ENCODE measurements at regions of chr3 and their contacts with region 1.

Region 1: GRCh38 chr3:188439080-188439479 is 285.1 kb downstream of the LPP start:
- DNase-seq: peak in 6 of 9 experiments; percentile 20 to 78 (median 34)
- ATAC-seq: peak; percentile 88
- H3K4me3 ChIP-seq: no peak overlapping the region
- H3K4me3 Mint-ChIP-seq: peak overlapping the region; percentile 48
- H3K27ac ChIP-seq: peak overlapping the region in 1 of 2 experiments; percentile 78
- H3K27ac Mint-ChIP-seq: peak overlapping the region; percentile 41
- H3K4me1 ChIP-seq: peaks cover 17% of the 10 kb centered on the region
- H3K4me1 Mint-ChIP-seq: peaks cover 44% of the 10 kb centered on the region
- H3K27me3 ChIP-seq: no peaks in the 10 kb centered on the region
- H3K27me3 Mint-ChIP-seq: no peaks in the 10 kb centered on the region
- CTCF ChIP-seq: no peak

Region 2: DNA sequence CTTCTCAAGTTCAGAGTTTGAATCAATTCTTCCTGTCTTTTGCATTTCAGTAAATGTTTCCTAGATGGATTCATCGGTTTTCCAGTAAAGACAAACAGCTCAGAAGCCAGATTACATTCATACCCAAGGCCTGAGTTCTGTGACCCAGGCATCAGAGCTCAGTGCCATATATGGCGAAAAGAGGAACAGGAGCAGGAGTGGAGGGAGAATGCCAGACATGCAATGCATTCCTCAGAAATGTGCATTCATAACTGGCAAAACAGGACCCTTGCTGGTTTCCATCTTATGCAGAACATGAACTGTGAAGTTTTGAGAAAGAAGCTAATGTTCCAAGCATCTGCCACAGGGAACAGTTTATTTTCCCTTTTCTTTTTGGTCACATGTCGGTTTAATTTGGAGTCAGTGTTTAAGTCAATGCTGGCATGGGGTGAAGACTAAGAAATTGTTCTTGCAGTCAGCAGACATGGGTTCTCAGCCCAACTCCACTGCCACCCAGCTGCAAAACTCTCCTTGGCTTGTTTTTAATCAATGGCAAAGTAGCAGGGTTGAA is 168.6 kb before region 1 on chr3:
- CTCF ChIA-PET with region 1: no interaction called
- POLR2A ChIA-PET with region 1: no interaction called
- intact Hi-C with region 1: no loop called
- DNase-seq: no peak
- ATAC-seq: no peak
- H3K4me3 ChIP-seq: no peak overlapping the region
- H3K4me3 Mint-ChIP-seq: no peak overlapping the region
- H3K27ac ChIP-seq: no peak overlapping the region
- H3K27ac Mint-ChIP-seq: no peak overlapping the region
- H3K4me1 ChIP-seq: no peaks in the 10 kb centered on the region
- H3K4me1 Mint-ChIP-seq: peaks cover 19% of the 10 kb centered on the region
- H3K27me3 ChIP-seq: no peaks in the 10 kb centered on the region
- H3K27me3 Mint-ChIP-seq: no peaks in the 10 kb centered on the region
- CTCF ChIP-seq: no peak

Region 3: GRCh38 chr3:188389711-188390342 is 49.3 kb before region 1 on chr3:
- CTCF ChIA-PET with region 1: no interaction called
- POLR2A ChIA-PET with region 1: no interaction called
- intact Hi-C with region 1: loop called in 1 of 2 experiments (anchors 2 kb)
- DNase-seq: peak in 4 of 9 experiments; percentile 18 to 49 (median 29)
- ATAC-seq: peak; percentile 56
- H3K4me3 ChIP-seq: no peak overlapping the region
- H3K4me3 Mint-ChIP-seq: no peak overlapping the region
- H3K27ac ChIP-seq: no peak overlapping the region
- H3K27ac Mint-ChIP-seq: peak overlapping the region; percentile 30
- H3K4me1 ChIP-seq: no peaks in the 10 kb centered on the region
- H3K4me1 Mint-ChIP-seq: peaks cover 23% of the 10 kb centered on the region
- H3K27me3 ChIP-seq: no peaks in the 10 kb centered on the region
- H3K27me3 Mint-ChIP-seq: no peaks in the 10 kb centered on the region
- CTCF ChIP-seq: no peak

Measured in CD8-positive, alpha-beta T cell (primary cell).